Psoas muscle (tissue), 8 donors: ENCODE measurements at regions of chr15 and their contacts with region 1.

Region 1: DNA sequence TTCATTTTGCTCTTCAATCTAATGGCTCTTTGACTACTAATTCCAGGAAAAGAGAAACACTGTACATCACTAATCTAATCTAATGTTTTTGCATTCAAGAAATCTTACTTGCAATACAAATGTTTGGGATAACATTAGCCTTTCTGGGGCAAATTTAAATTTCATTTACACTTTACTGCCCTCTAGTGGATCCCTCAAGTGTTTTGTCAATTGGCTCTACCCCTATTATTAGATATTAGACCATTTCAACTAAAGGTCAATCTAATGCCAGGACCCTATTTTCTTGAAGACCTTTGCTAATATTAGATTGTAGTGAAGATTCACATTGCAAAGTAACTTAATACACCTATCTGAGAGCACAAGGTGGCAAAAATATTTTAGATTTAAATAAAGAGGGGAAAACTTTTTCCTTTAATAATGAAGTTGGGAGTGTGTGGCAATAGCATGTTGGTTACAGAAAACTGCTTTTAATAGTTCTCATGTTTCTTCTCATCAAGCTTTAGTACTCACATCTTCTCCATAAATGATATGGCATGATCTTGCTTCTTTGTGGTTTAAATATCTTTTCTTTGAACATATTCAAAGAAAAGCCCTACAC is 5.0 kb downstream of the C2CD4A start:
- DNase-seq: no peak
- ATAC-seq: peak in 1 of 4 donors; percentile 42
- H3K4me3 ChIP-seq: no peak overlapping the region
- H3K27ac ChIP-seq: no peak overlapping the region
- H3K4me1 ChIP-seq: peaks cover 7% of the 10 kb centered on the region
- H3K27me3 ChIP-seq: peaks cover 0 to 6% (median 2%) of the 10 kb centered on the region in 3 donors
- CTCF ChIP-seq: peak; percentile 74

Region 2: GRCh38 chr15:61871926-61872522 is 199.8 kb before region 1 on chr15:
- intact Hi-C with region 1: loop called (anchors 5 kb)
- DNase-seq: no peak
- ATAC-seq: peak in 2 of 4 donors; percentile 43
- H3K4me3 ChIP-seq: no peak overlapping the region
- H3K27ac ChIP-seq: no peak overlapping the region
- H3K4me1 ChIP-seq: no peaks in the 10 kb centered on the region
- H3K27me3 ChIP-seq: no peaks in the 10 kb centered on the region
- CTCF ChIP-seq: peak; percentile 60

Region 3: GRCh38 chr15:62125773-62126172 is 54.0 kb after region 1 on chr15:
- intact Hi-C with region 1: no loop called
- DNase-seq: no peak
- ATAC-seq: peak; percentile 27 to 74 (median 70)
- H3K4me3 ChIP-seq: no peak overlapping the region
- H3K27ac ChIP-seq: no peak overlapping the region
- H3K4me1 ChIP-seq: no peaks in the 10 kb centered on the region
- H3K27me3 ChIP-seq: no peaks in the 10 kb centered on the region
- CTCF ChIP-seq: peak; percentile 31

Region 4: DNA sequence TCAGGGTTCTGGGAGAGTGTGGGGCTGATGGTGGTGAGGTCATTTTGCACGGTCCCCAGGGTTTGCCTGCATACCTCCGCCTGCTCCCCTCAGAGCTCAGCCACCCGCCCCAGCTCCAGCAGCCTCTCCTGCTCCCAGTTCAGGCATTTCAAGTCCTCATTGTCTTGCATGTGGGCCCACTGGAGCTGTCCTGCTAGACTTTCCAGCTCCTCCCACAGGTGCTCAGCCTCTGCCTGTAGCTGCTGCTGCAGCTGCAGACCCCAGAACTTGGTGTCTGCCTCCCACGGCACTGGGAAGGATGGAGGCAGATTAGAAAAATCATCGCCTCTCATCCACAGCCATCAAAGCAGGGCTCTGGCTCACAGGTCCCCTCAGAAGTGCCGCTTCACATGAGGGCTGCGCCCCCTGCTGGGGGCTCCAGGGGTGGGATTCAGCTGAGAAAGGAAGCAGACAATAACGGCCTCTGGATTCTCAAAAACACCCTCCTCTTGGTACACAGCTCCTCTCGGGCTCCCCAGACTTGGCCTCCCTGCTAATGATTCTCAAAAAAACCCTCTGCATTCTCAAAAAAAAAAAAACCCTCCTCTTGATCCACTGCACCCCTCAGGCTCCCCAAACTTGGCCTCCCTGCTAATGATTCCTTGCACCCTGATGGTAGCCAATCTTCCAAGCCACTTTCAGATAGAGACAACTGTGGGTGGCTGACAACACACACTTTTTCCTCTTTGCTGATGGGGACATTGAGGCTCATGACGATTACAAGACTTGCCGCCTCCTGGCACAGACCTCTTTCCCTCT is 182.5 kb after region 1 on chr15:
- intact Hi-C with region 1: loop called in 1 of 2 experiments (anchors 10 kb)
- DNase-seq: peak; percentile 69 to 77
- ATAC-seq: peak; percentile 57 to 79 (median 72)
- H3K4me3 ChIP-seq: no peak overlapping the region
- H3K27ac ChIP-seq: no peak overlapping the region
- H3K4me1 ChIP-seq: no peaks in the 10 kb centered on the region
- H3K27me3 ChIP-seq: no peaks in the 10 kb centered on the region
- CTCF ChIP-seq: peak; percentile 65

Region 5: GRCh38 chr15:62306851-62307504 is 235.2 kb after region 1 on chr15:
- intact Hi-C with region 1: loop called in 1 of 2 experiments (anchors 5 kb)
- DNase-seq: peak in 1 of 2 donors; percentile 35
- ATAC-seq: peak; percentile 76 to 90 (median 87)
- H3K4me3 ChIP-seq: no peak overlapping the region
- H3K27ac ChIP-seq: no peak overlapping the region
- H3K4me1 ChIP-seq: peaks cover 3% of the 10 kb centered on the region
- H3K27me3 ChIP-seq: peaks cover 0 to 9% (median 0%) of the 10 kb centered on the region in 3 donors
- CTCF ChIP-seq: peak; percentile 69